ENCODE measurements at regions of chrX and their contacts with region 1.

Region 1: DNA sequence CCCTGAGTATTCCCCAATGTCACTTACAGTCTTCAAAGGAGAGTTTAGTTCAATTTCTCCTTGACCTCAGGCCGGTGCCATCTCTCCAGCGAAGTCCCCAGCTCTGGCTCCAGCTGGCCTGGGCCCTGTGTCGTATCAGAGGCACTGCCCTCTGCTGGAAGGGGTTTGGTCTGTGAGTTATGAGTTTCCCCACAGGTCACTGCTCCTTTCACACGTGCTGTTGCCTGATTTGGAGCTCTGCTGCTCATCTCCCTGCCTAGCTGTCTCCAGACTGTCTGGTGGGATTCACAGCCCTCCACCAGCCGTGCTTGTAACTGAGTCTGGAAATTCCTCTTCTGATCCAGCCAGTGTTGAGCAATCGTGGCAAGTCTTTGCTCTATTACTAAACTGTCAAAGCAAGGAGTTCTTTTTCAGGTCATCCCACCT is at the start of gene RAP2C:
- DNase-seq: peak; percentile 66
- CTCF ChIP-seq: peak; percentile 56

Region 2: GRCh38 chrX:131827935-131828334 is 391.4 kb before region 1 on chrX:
- CTCF ChIA-PET with region 1: interaction called, 15 read pairs
- POLR2A ChIA-PET with region 1: no interaction called
- DNase-seq: peak; percentile 28
- CTCF ChIP-seq: peak; percentile 25

Region 3: GRCh38 chrX:131841496-131842410 is 377.6 kb before region 1 on chrX:
- CTCF ChIA-PET with region 1: interaction called, 14 read pairs
- POLR2A ChIA-PET with region 1: no interaction called
- DNase-seq: peak; percentile 69
- CTCF ChIP-seq: peak; percentile 73

Region 4: GRCh38 chrX:131854581-131854980 is 364.8 kb before region 1 on chrX:
- CTCF ChIA-PET with region 1: interaction called, 12 read pairs
- POLR2A ChIA-PET with region 1: no interaction called
- DNase-seq: no peak
- CTCF ChIP-seq: no peak

Region 5: GRCh38 chrX:131987252-131987651 is 232.1 kb before region 1 on chrX:
- CTCF ChIA-PET with region 1: no interaction called
- POLR2A ChIA-PET with region 1: no interaction called
- DNase-seq: peak; percentile 37
- CTCF ChIP-seq: no peak

Region 6: DNA sequence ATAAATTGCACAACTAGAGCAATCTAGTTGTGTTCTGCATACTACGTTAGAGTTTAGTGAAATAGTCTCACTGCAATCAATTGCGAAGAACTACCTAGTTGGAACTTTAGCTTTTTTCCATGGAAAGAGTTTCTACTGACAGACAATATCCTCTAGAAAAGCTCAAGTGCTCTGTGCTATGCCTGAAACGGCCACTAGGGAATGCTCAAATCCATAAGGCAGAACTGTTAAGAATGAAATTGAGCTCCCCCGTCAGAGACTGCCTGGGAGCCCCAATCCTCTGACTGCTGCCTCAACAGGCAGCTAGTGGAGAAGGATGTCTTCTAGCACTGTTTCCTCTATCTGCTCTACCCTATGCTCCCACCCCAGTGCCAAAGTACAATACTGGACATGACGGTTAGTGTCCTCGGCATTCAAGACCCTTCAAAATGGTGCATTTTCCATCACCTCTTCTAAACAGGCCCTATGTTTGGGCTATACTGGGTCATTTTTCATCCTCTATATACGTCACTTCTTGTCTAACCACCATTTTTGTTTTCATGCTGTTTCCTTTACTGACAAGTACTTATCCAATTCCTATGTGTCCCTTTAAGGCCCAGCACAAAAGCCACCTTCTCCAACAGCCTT is 126.8 kb before region 1 on chrX:
- CTCF ChIA-PET with region 1: interaction called, 25 read pairs
- POLR2A ChIA-PET with region 1: no interaction called
- DNase-seq: peak; percentile 50
- CTCF ChIP-seq: peak; percentile 51

Region 7: DNA sequence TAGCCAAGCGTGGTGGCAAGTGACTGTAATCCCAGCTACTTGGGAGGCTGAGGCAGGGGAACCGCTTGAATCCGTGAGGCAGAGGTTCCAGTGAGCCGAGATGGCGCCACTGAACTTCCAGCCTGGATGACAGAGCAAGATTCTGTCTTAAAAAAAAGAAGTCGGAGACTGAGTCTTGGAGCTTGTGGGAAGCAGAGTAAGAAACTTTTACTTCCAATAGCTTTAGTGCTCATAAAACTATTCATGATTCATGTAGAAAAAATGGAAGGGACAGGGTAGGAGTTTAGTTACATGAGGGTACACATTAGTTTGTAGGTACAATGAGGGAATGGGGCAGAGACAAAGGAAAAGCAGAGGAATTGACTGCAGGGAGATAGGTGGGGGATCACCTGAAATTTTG is 19.4 kb before region 1 on chrX:
- CTCF ChIA-PET with region 1: interaction called, 14 read pairs
- POLR2A ChIA-PET with region 1: no interaction called
- DNase-seq: no peak
- CTCF ChIP-seq: no peak

Region 8: GRCh38 chrX:132631579-132632232 is 412.4 kb after region 1 on chrX:
- CTCF ChIA-PET with region 1: interaction called, 15 read pairs
- POLR2A ChIA-PET with region 1: no interaction called
- DNase-seq: peak; percentile 15
- CTCF ChIP-seq: peak; percentile 38